Activated CD4-positive, alpha-beta memory T cell treated with anti-CD3 and anti-CD28 coated beads for 36 hours (primary cell): ENCODE measurements at regions of chr9 and their contacts with region 1.

Region 1: DNA sequence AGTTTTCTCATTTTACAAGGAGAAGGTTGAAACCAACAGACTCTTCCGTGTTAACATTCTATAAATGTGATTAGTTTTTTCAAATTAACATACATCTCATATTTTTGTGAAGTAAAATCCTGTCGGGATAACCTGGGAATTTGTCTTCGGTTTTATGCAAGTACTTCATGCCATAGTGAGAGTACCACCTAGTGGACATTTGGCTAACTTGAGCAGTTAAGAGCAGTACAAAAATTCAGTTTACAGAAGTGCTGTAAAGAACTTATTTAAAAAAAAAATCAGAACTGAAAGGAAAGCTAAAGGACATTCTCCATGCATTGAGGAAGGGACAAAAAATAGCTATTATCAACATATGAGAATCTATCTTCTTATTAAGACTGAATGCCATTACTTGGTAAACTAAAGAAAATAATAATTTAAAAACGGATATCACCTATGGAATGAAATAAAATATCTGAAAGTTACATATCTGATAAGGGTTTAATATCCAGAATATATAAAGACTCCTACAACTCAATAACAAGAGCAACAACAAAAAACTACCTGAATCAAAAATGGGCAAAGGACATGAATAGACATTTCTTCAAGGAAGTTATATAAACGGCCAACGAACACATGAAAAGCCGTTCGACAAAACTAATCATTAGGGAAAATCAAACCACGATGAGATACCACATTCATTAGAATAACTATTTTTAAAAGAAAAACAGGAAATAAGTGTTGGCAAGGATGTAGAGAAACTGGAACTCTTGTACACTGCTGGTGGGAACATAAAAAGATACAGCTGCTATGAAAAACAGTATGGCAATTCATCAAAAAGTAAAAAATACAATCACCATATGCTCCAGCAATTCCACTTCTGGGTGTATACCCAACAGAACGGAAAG is 117.0 kb upstream of the GNA14 start:
- DNase-seq: no peak
- H3K4me3 Mint-ChIP-seq: no peak overlapping the region
- H3K27ac Mint-ChIP-seq: no peak overlapping the region
- H3K4me1 Mint-ChIP-seq: peaks cover 13% of the 10 kb centered on the region
- H3K27me3 Mint-ChIP-seq: no peaks in the 10 kb centered on the region

Region 2: GRCh38 chr9:77392328-77392727 is 372.8 kb before region 1 on chr9:
- CTCF ChIA-PET with region 1: no interaction called
- POLR2A ChIA-PET with region 1: no interaction called
- intact Hi-C with region 1: no loop called
- DNase-seq: no peak
- H3K4me3 Mint-ChIP-seq: no peak overlapping the region
- H3K27ac Mint-ChIP-seq: no peak overlapping the region
- H3K4me1 Mint-ChIP-seq: no peaks in the 10 kb centered on the region
- H3K27me3 Mint-ChIP-seq: no peaks in the 10 kb centered on the region

Region 3: GRCh38 chr9:77663754-77664153 is 101.4 kb before region 1 on chr9:
- CTCF ChIA-PET with region 1: no interaction called
- POLR2A ChIA-PET with region 1: no interaction called
- intact Hi-C with region 1: no loop called
- DNase-seq: no peak
- H3K4me3 Mint-ChIP-seq: no peak overlapping the region
- H3K27ac Mint-ChIP-seq: no peak overlapping the region
- H3K4me1 Mint-ChIP-seq: no peaks in the 10 kb centered on the region
- H3K27me3 Mint-ChIP-seq: peaks cover 2% of the 10 kb centered on the region

Region 4: DNA sequence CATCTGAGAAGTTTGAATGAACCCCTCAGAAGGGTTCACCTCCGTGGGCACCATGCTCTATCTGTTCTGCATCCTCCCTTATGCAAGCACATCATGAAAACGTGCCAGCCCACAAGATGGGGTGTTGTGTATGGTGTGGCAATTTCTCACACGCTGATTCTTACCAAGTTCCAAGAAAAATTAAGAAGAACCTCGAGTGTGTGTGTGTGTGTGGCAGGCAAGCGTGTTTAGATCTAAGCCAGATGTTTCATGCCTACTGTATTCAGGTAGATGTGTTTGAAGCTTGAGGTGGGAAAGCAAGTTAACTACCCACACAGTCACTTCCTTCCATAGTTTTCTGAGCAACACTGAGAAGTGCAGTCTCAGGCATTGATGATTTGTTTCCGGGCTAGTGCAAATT is 39.3 kb before region 1 on chr9:
- CTCF ChIA-PET with region 1: interaction called, 4 read pairs
- POLR2A ChIA-PET with region 1: interaction called, 4 read pairs
- intact Hi-C with region 1: loop called (anchors 5 kb)
- DNase-seq: peak; percentile 62
- H3K4me3 Mint-ChIP-seq: no peak overlapping the region
- H3K27ac Mint-ChIP-seq: peak overlapping the region; percentile 77
- H3K4me1 Mint-ChIP-seq: peaks cover 45% of the 10 kb centered on the region
- H3K27me3 Mint-ChIP-seq: no peaks in the 10 kb centered on the region

Region 5: DNA sequence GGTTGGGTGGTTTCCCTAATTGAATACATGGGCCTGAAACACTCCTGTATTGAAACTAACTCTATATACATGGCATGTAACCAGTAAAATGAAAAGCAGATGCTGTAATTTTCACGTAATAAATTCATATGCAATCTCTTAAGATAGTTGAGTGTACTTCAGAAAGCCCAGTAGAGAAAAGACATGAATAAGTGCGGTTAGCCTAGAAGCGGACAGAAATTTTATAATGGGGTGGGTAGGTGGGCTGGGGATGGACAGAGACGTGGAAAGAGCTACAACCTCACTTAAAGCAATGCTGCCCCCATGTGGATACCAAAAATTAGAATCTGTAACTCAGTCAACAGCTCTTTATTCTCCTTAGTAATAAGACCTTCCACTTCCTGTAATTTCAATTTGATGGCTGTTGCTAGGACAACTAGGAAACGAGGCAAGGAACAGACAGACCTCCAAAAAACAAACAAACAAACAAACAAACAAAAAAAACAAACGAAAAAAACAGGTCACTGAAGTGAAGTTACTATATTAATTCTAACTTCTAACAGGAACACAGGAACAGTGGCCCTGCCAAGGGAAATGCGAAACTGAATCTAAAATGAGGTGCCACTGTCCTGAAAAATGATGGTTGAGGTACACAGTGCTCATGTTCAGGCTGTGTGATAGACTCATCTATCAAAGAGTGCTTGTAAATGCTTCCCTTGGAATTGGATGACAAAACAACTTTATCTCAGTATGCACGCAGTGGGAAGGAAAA is 13.6 kb before region 1 on chr9:
- CTCF ChIA-PET with region 1: interaction called, 13 read pairs
- POLR2A ChIA-PET with region 1: no interaction called
- intact Hi-C with region 1: no loop called
- DNase-seq: no peak
- H3K4me3 Mint-ChIP-seq: no peak overlapping the region
- H3K27ac Mint-ChIP-seq: no peak overlapping the region
- H3K4me1 Mint-ChIP-seq: peaks cover 21% of the 10 kb centered on the region
- H3K27me3 Mint-ChIP-seq: no peaks in the 10 kb centered on the region

Region 6: DNA sequence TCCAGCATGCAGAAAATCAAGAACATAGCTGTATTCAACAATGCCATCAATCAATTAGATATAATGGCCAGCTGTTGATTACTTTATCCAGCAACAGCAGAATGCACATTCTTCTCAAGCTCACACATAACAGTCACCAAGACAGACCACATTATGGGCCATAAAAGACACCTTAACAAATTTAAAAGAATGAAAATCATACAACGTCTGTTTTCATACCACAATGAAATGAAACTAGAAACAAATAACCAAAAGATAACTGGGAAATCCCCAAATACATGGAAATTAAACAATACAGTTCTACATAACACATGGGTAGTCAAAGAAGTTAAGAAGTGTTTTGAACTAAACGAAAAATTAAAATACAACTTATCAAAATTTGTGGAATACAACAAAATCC is 13.9 kb after region 1 on chr9:
- CTCF ChIA-PET with region 1: no interaction called
- POLR2A ChIA-PET with region 1: no interaction called
- intact Hi-C with region 1: loop called (anchors 1 kb)
- DNase-seq: no peak
- H3K4me3 Mint-ChIP-seq: peak overlapping the region; percentile 65
- H3K27ac Mint-ChIP-seq: peak overlapping the region; percentile 63
- H3K4me1 Mint-ChIP-seq: peaks cover 39% of the 10 kb centered on the region
- H3K27me3 Mint-ChIP-seq: no peaks in the 10 kb centered on the region

Region 7: GRCh38 chr9:77807281-77807683 is 42.1 kb after region 1 on chr9:
- CTCF ChIA-PET with region 1: no interaction called
- POLR2A ChIA-PET with region 1: no interaction called
- intact Hi-C with region 1: loop called (anchors 5 kb)
- DNase-seq: no peak
- H3K4me3 Mint-ChIP-seq: no peak overlapping the region
- H3K27ac Mint-ChIP-seq: peak overlapping the region; percentile 36
- H3K4me1 Mint-ChIP-seq: peaks cover 42% of the 10 kb centered on the region
- H3K27me3 Mint-ChIP-seq: no peaks in the 10 kb centered on the region

Region 8: DNA sequence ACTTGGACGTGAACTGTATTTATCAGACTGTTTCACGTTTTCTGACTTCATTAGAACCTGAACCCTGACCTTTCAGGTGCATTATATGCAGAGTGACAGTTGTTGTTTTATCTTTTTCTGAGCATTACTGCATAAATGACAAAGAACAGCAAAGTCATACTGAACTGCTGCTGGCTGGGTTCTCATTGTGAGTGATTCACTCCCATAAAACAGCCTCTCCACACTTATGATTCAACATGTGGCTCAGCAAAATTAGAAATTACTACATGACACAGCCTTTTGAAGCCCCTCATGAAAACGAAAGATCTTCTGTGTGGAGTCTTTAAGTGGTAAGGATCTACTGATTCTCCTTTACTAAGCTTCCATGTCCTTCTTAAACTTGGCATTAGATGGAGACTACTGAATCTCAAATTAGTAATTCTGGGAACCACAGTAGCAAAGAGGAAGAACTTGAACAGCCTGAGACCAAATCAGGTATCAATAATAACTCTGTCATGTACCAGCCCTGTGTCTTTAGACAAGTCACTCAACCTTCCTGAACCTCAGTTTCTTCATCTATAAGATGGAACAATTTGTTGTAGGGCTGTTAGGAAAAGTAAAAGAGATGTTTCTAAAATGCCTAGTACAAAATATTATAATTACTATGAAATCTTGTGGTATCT is 55.3 kb after region 1 on chr9:
- CTCF ChIA-PET with region 1: no interaction called
- POLR2A ChIA-PET with region 1: no interaction called
- intact Hi-C with region 1: loop called (anchors 2 kb)
- DNase-seq: peak; percentile 32
- H3K4me3 Mint-ChIP-seq: no peak overlapping the region
- H3K27ac Mint-ChIP-seq: peak overlapping the region; percentile 62
- H3K4me1 Mint-ChIP-seq: peaks cover 34% of the 10 kb centered on the region
- H3K27me3 Mint-ChIP-seq: no peaks in the 10 kb centered on the region